Sigmoid colon (tissue), 7 donors: ENCODE measurements at regions of chr13 and their contacts with region 1.

Region 1: GRCh38 chr13:27353166-27353583 is 71.2 kb upstream of the GTF3A start:
- DNase-seq: no peak
- H3K4me3 ChIP-seq: peak overlapping the region in 3 of 4 donors; percentile 2 to 15 (median 14)
- H3K27ac ChIP-seq: peak overlapping the region; percentile 69 to 80 (median 78)
- H3K4me1 ChIP-seq: peaks cover 0 to 28% (median 27%) of the 10 kb centered on the region in 4 donors
- H3K27me3 ChIP-seq: no peaks in the 10 kb centered on the region
- CTCF ChIP-seq: no peak
- EP300 ChIP-seq: no peak
- POLR2A ChIP-seq: no peak

Region 2: DNA sequence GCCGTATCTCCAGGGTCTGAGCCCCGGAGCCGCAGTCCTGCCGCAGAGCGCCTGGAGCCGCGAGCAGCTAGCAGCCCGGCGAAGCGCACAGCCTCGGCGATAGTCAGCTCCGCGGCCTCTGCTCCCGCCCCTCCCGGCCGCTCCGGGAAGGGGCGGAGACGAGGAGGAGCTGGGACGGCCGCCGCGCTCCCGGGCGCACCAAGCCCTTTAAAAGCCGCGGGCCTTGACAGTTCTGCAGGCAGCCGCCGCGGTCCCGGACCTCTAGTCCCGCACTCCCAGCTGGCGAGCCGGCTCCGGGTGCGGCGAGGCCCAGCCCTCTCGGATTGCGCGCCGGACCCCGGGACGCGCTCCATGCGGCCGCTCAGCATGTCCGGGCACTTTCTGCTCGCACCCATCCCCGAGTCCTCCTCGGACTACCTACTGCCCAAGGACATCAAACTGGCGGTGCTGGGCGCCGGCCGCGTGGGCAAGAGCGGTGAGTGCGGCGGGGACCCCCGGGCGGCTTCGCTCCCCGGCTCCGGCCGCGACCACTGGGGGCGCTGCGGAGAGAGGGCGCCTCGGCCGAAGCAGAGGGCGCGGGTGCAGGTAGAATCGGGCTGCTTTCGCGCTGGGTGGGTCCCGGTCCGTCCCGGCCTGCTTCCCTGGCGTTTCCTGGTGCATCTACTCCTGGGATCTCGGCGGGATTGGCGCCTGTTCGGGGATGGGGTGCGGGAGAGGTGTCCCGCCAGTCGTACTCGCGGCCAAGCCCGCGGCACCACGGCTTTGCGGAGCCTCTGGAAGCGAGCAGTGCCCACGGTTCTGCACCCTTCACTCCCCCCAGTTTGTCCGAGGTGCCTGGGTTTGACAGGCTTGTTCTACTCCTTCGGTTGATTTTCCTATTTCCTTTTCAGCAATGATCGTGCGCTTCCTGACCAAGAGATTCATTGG is 82.3 kb before region 1 on chr13 and contains the start of gene RASL11A:
- intact Hi-C with region 1: loop called (anchors 2 kb)
- DNase-seq: peak; percentile 95
- H3K4me3 ChIP-seq: peak within 1 kb of the TSS; percentile 73 to 85 (median 79)
- H3K27ac ChIP-seq: peak within 1 kb of the TSS; percentile 92 to 96 (median 96)
- H3K4me1 ChIP-seq: peaks cover 0 to 41% (median 34%) of the 10 kb centered on the region in 4 donors
- H3K27me3 ChIP-seq: no peaks in the 10 kb centered on the region
- CTCF ChIP-seq: peak; percentile 77 to 99 (median 86)
- EP300 ChIP-seq: no peak
- POLR2A ChIP-seq: peak; percentile 61 to 69
- total RNA-seq, gene RASL11A: 14.1 to 123 (median 18.4) TPM

Region 3: DNA sequence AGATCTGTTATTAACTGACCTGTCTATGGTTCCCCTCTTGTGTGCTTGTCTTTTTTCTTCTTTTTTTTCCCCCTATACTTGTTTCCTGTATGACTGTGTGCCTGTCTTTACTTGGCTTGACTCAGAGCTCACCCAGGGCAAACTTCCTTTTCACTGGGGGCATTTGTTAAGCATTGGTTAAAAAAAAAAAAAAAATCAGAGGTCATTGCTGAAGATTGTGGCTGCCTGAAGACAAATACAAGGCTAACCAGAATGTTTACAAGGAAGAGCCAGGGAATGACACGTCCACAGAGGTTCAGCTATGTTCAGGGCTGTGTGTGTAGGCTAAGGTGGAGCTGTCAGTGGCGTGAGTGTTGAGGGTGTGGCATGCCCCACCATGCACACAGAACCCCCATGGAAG is 220.1 kb after region 1 on chr13:
- intact Hi-C with region 1: no loop called
- DNase-seq: no peak
- H3K4me3 ChIP-seq: no peak overlapping the region
- H3K27ac ChIP-seq: no peak overlapping the region
- H3K4me1 ChIP-seq: no peaks in the 10 kb centered on the region
- H3K27me3 ChIP-seq: no peaks in the 10 kb centered on the region
- CTCF ChIP-seq: no peak
- EP300 ChIP-seq: no peak
- POLR2A ChIP-seq: no peak